ENCODE measurements at regions of chr7 and their contacts with region 1.

Region 1: GRCh38 chr7:2354186-2354938 is at the start of gene EIF3B:
- DNase-seq: peak; percentile 94
- H3K4me3 Mint-ChIP-seq: peak within 1 kb of the TSS; percentile 91
- H3K27ac Mint-ChIP-seq: peak within 1 kb of the TSS; percentile 100
- H3K4me1 Mint-ChIP-seq: peaks cover 9% of the 10 kb centered on the region
- H3K27me3 Mint-ChIP-seq: no peaks in the 10 kb centered on the region
- CTCF ChIP-seq: no peak
- total RNA-seq, gene EIF3B: 258 and 290 TPM in 2 replicates

Region 2: GRCh38 chr7:1532483-1533424 is 821.6 kb before region 1 on chr7:
- CTCF ChIA-PET with region 1: no interaction called
- POLR2A ChIA-PET with region 1: interaction called, 14 read pairs
- intact Hi-C with region 1: no loop called
- DNase-seq: peak; percentile 94
- H3K4me3 Mint-ChIP-seq: peak overlapping the region; percentile 81
- H3K27ac Mint-ChIP-seq: peak overlapping the region; percentile 86
- H3K4me1 Mint-ChIP-seq: peaks cover 12% of the 10 kb centered on the region
- H3K27me3 Mint-ChIP-seq: no peaks in the 10 kb centered on the region
- CTCF ChIP-seq: no peak

Region 3: GRCh38 chr7:1555809-1556540 is 798.4 kb before region 1 on chr7 and contains the start of gene TMEM184A:
- CTCF ChIA-PET with region 1: no interaction called
- POLR2A ChIA-PET with region 1: interaction called, 12 read pairs
- intact Hi-C with region 1: no loop called
- DNase-seq: peak; percentile 87
- H3K4me3 Mint-ChIP-seq: peak within 1 kb of the TSS; percentile 72
- H3K27ac Mint-ChIP-seq: peak within 1 kb of the TSS; percentile 94
- H3K4me1 Mint-ChIP-seq: peaks cover 22% of the 10 kb centered on the region
- H3K27me3 Mint-ChIP-seq: no peaks in the 10 kb centered on the region
- CTCF ChIP-seq: peak; percentile 66
- total RNA-seq, gene TMEM184A: 9.0 and 14.2 TPM in 2 replicates

Region 4: DNA sequence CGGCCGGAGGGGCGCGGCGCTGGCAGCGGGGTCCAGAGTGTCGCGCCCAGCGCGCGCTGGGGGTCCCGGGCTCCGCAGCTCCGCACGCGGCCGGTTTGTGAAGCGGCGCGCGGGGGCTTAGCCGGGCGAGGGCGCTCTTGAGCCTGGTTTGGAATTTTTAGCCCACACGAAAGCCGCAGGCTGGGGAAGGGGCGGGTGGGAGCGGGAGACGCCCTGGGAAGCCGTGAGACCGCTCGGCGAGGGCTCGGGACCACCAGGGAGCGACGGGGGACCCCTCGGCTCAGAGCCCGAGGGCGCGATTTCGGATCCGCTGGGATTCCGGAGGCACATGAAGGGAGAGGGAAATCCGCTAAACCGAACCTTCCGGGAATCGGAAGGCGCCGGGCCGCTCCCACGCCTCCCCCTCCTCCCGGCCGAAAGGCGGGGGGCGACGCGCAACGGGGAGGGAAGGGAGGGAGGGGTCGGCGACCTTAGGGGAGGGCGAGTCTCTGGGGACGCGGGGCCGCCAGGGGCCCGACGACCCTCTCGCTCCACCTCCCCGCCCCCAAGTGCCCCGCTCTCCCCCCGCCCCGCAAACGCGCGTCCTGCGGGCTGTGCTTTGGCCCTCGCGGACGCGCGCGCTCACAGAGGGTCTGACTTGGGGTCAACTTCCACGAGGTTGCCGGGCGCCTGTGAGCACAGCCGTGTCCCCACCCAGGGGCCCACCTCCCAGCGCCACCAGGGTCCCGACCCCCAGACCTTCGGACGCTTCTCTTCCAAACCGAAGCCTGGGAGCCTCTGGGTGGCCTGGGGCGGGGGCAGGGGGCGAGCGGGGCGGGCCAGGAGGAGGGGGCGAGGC is 689.4 kb before region 1 on chr7:
- CTCF ChIA-PET with region 1: no interaction called
- POLR2A ChIA-PET with region 1: no interaction called
- intact Hi-C with region 1: loop called (anchors 2 kb)
- DNase-seq: peak; percentile 29
- H3K4me3 Mint-ChIP-seq: no peak overlapping the region
- H3K27ac Mint-ChIP-seq: no peak overlapping the region
- H3K4me1 Mint-ChIP-seq: no peaks in the 10 kb centered on the region
- H3K27me3 Mint-ChIP-seq: peaks cover 51% of the 10 kb centered on the region
- CTCF ChIP-seq: peak; percentile 49

Region 5: GRCh38 chr7:1961701-1962276 is 392.6 kb before region 1 on chr7:
- CTCF ChIA-PET with region 1: no interaction called
- POLR2A ChIA-PET with region 1: no interaction called
- intact Hi-C with region 1: no loop called
- DNase-seq: peak; percentile 9
- H3K4me3 Mint-ChIP-seq: no peak overlapping the region
- H3K27ac Mint-ChIP-seq: no peak overlapping the region
- H3K4me1 Mint-ChIP-seq: peaks cover 13% of the 10 kb centered on the region
- H3K27me3 Mint-ChIP-seq: no peaks in the 10 kb centered on the region
- CTCF ChIP-seq: no peak

Region 6: GRCh38 chr7:2241580-2242540 is 112.5 kb before region 1 on chr7 and contains the starts of genes MRM2 and NUDT1:
- CTCF ChIA-PET with region 1: no interaction called
- POLR2A ChIA-PET with region 1: interaction called, 13 read pairs
- intact Hi-C with region 1: no loop called
- DNase-seq: peak; percentile 82
- H3K4me3 Mint-ChIP-seq: peak within 1 kb of the TSS; percentile 94
- H3K27ac Mint-ChIP-seq: peak within 1 kb of the TSS; percentile 89
- H3K4me1 Mint-ChIP-seq: no peaks in the 10 kb centered on the region
- H3K27me3 Mint-ChIP-seq: no peaks in the 10 kb centered on the region
- CTCF ChIP-seq: no peak
- total RNA-seq, gene MRM2: 26.9 and 32.1 TPM in 2 replicates
- total RNA-seq, gene NUDT1: 20.3 and 27.2 TPM in 2 replicates

Region 7: GRCh38 chr7:2314209-2314955 is 40.0 kb before region 1 on chr7 and contains the start of gene SNX8:
- CTCF ChIA-PET with region 1: no interaction called
- POLR2A ChIA-PET with region 1: interaction called, 12 read pairs
- intact Hi-C with region 1: no loop called
- DNase-seq: peak; percentile 82
- H3K4me3 Mint-ChIP-seq: no peak within 1 kb of the TSS
- H3K27ac Mint-ChIP-seq: no peak within 1 kb of the TSS
- H3K4me1 Mint-ChIP-seq: peaks cover 10% of the 10 kb centered on the region
- H3K27me3 Mint-ChIP-seq: no peaks in the 10 kb centered on the region
- CTCF ChIP-seq: no peak
- total RNA-seq, gene SNX8: 31.0 and 31.2 TPM in 2 replicates

Region 8: GRCh38 chr7:2403014-2403717 is 48.8 kb after region 1 on chr7 and contains the start of gene CHST12:
- CTCF ChIA-PET with region 1: no interaction called
- POLR2A ChIA-PET with region 1: interaction called, 12 read pairs
- intact Hi-C with region 1: no loop called
- DNase-seq: peak; percentile 90
- H3K4me3 Mint-ChIP-seq: peak within 1 kb of the TSS; percentile 77
- H3K27ac Mint-ChIP-seq: peak within 1 kb of the TSS; percentile 39
- H3K4me1 Mint-ChIP-seq: peaks cover 37% of the 10 kb centered on the region
- H3K27me3 Mint-ChIP-seq: no peaks in the 10 kb centered on the region
- CTCF ChIP-seq: no peak
- total RNA-seq, gene CHST12: 9.8 and 9.9 TPM in 2 replicates